GM12878 (cell line): ENCODE measurements at regions of chr2 and their contacts with region 1.

Region 1: DNA sequence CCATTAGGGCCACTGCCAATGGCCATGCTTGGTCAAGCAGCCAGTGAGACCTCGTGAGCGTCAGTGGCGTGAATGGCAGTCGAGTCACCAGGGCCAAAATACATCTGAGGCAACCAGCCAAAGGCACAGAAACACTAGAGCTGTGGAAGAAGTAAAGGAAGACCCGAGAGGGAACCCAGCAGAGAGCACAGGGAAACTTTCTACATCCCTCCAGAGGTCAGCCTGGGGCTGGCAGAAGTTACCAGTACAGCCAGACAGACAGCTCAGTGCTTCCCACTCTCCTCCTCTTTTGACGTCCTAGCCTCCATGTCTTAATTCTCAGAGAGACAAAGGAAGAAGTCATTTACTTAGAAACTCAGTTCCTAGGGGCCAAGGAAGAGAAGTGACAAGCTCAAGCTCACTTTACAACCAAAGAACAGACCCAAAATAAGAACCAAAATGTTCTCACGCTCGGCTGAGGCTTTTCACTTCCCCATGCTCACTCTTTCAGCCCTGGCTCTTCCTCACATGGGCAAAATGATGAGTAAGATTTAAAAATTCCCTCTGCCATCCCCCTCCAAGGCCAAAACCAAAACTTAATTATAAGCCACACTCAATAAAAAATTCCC is 8.7 kb downstream of the CYRIA start:
- DNase-seq: peak; percentile 83
- ATAC-seq: peak; percentile 67
- H3K4me3 ChIP-seq: peak overlapping the region; percentile 3; the same call in 1 of the 2 replicates
- H3K27ac ChIP-seq: peak overlapping the region; percentile 68
- H3K4me1 ChIP-seq: peaks cover 48% of the 10 kb centered on the region
- H3K27me3 ChIP-seq: peaks cover 0 to 2% of the 10 kb centered on the region in 2 experiments; a peak in 2 of 4 replicates
- CTCF ChIP-seq: no peak
- EP300 ChIP-seq: peak; percentile 62 to 73; a peak in 3 of 4 replicates
- POLR2A ChIP-seq: no peak
- RAD21 ChIP-seq: no peak

Region 2: GRCh38 chr2:16630463-16630862 is 26.4 kb before region 1 on chr2:
- CTCF ChIA-PET with region 1: interaction called, 73 read pairs
- POLR2A ChIA-PET with region 1: interaction called, 15 read pairs
- RAD21 ChIA-PET with region 1: interaction called, 185 read pairs
- SMC1A ChIA-PET with region 1: interaction called, 302 read pairs
- in situ Hi-C with region 1: no loop called
- intact Hi-C with region 1: loop called (anchors 2 kb)
- DNase-seq: no peak
- ATAC-seq: peak; percentile 69
- H3K4me3 ChIP-seq: no peak overlapping the region
- H3K27ac ChIP-seq: no peak overlapping the region
- H3K4me1 ChIP-seq: peaks cover 10% of the 10 kb centered on the region
- H3K27me3 ChIP-seq: peaks cover 0 to 16% of the 10 kb centered on the region in 2 experiments
- CTCF ChIP-seq: peak; percentile 18 to 31 (median 27); a peak in 3 of 6 replicates
- EP300 ChIP-seq: no peak
- POLR2A ChIP-seq: no peak
- RAD21 ChIP-seq: peak; percentile 60

Region 3: DNA sequence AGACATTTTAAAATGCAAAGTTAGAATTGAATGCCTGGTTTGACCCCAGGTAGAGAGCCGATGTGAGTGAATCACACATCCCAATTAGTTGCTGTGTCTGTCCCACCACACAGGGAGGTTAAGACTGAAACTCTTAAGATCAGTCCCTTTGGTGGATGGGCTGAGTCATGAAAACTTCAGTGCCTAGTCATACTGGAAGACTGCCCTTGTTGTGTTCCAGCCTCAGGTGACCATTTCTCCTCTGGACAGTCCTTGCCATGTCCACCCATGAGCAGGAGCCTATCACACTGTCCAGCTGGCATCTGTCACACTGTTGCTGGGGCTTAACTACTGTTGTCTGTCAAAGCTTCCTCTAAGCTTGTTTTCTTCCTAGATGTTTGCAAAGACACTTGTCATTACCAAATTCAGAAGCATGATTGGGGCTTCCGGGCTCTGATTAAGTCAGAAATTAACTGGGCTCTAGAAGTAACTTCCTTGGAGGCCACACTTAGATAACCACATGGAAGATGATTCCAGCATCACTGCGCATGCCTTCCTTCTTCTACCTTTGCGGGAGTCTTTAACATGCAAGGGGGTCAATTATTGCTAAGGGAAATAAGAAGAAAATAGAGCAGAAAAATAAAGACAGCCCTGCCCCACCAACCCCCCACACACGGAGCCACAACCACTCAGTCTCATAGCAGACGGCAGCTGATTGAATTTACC is 12.5 kb before region 1 on chr2:
- CTCF ChIA-PET with region 1: interaction called, 5 read pairs
- POLR2A ChIA-PET with region 1: interaction called, 21 read pairs
- RAD21 ChIA-PET with region 1: interaction called, 12 read pairs
- SMC1A ChIA-PET with region 1: interaction called, 68 read pairs
- in situ Hi-C with region 1: no loop called
- intact Hi-C with region 1: no loop called
- DNase-seq: no peak
- ATAC-seq: peak; percentile 79
- H3K4me3 ChIP-seq: no peak overlapping the region
- H3K27ac ChIP-seq: no peak overlapping the region
- H3K4me1 ChIP-seq: no peaks in the 10 kb centered on the region
- H3K27me3 ChIP-seq: peaks cover 0 to 5% of the 10 kb centered on the region in 2 experiments; a peak in 1 of 4 replicates
- CTCF ChIP-seq: no peak
- EP300 ChIP-seq: 0 out of 4 replicates have a peak, but pooled peaks of 1 of the 2 experiments have one; percentile 13
- POLR2A ChIP-seq: no peak
- RAD21 ChIP-seq: no peak

Region 4: DNA sequence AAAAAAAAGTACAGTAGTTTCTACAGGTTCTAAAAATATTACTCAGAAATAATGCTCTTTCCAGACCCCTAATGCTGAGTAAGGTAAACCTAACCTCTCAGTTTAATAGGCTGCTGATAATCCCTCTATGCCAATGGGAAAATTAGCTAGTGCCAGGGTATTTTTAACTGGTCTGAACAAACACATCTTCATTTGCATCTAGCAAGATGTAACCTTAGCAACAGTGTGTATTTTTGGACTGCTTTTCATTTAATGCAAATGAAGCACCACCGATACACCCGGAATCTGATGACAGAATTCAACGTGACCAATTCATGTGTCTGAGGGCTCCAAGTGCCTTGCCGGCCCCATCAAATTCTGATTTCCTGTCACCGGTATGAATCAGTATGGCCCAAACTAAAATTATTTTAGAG is 56.1 kb after region 1 on chr2:
- CTCF ChIA-PET with region 1: interaction called, 6 read pairs
- POLR2A ChIA-PET with region 1: interaction called, 33 read pairs
- RAD21 ChIA-PET with region 1: interaction called, 156 read pairs
- SMC1A ChIA-PET with region 1: interaction called, 141 read pairs
- in situ Hi-C with region 1: no loop called
- intact Hi-C with region 1: no loop called
- DNase-seq: no peak
- ATAC-seq: peak; percentile 92
- H3K4me3 ChIP-seq: no peak overlapping the region
- H3K27ac ChIP-seq: no peak overlapping the region
- H3K4me1 ChIP-seq: peaks cover 2% of the 10 kb centered on the region; the same call in 1 of the 2 replicates
- H3K27me3 ChIP-seq: 0 out of 4 replicates have a peak, but pooled peaks cover 0 to 2% of the 10 kb centered on the region in 2 experiments
- CTCF ChIP-seq: no peak
- EP300 ChIP-seq: peak; percentile 27 to 54; a peak in 2 of 4 replicates
- POLR2A ChIP-seq: no peak
- RAD21 ChIP-seq: no peak

Region 5: GRCh38 chr2:16763493-16763899 is 106.6 kb after region 1 on chr2:
- CTCF ChIA-PET with region 1: no interaction called
- POLR2A ChIA-PET with region 1: no interaction called
- RAD21 ChIA-PET with region 1: no interaction called
- SMC1A ChIA-PET with region 1: no interaction called
- in situ Hi-C with region 1: no loop called
- intact Hi-C with region 1: no loop called
- DNase-seq: no peak
- ATAC-seq: no peak
- H3K4me3 ChIP-seq: no peak overlapping the region
- H3K27ac ChIP-seq: no peak overlapping the region
- H3K4me1 ChIP-seq: no peaks in the 10 kb centered on the region
- H3K27me3 ChIP-seq: peaks cover 0 to 8% of the 10 kb centered on the region in 2 experiments; a peak in 3 of 4 replicates
- CTCF ChIP-seq: no peak
- EP300 ChIP-seq: no peak
- POLR2A ChIP-seq: no peak
- RAD21 ChIP-seq: no peak

Region 6: GRCh38 chr2:16851126-16851525 is 194.2 kb after region 1 on chr2:
- CTCF ChIA-PET with region 1: no interaction called
- POLR2A ChIA-PET with region 1: no interaction called
- RAD21 ChIA-PET with region 1: no interaction called
- SMC1A ChIA-PET with region 1: no interaction called
- in situ Hi-C with region 1: no loop called
- intact Hi-C with region 1: no loop called
- DNase-seq: no peak
- ATAC-seq: no peak
- H3K4me3 ChIP-seq: no peak overlapping the region
- H3K27ac ChIP-seq: no peak overlapping the region
- H3K4me1 ChIP-seq: no peaks in the 10 kb centered on the region
- H3K27me3 ChIP-seq: no peaks in the 10 kb centered on the region; a peak in 2 of 4 replicates
- CTCF ChIP-seq: no peak
- EP300 ChIP-seq: no peak
- POLR2A ChIP-seq: no peak
- RAD21 ChIP-seq: no peak